HEK293 (cell line): ENCODE measurements at regions of chr16 and their contacts with region 1.

Region 1: GRCh38 chr16:2023098-2023925 is 3.4 kb upstream of the NHERF2 start:
- H3K4me3 ChIP-seq: peak overlapping the region; percentile 13
- H3K27ac ChIP-seq: no peak overlapping the region
- H3K4me1 ChIP-seq: peaks cover 3% of the 10 kb centered on the region; the same call in 1 of the 2 replicates
- CTCF ChIP-seq: peak; percentile 98

Region 2: DNA sequence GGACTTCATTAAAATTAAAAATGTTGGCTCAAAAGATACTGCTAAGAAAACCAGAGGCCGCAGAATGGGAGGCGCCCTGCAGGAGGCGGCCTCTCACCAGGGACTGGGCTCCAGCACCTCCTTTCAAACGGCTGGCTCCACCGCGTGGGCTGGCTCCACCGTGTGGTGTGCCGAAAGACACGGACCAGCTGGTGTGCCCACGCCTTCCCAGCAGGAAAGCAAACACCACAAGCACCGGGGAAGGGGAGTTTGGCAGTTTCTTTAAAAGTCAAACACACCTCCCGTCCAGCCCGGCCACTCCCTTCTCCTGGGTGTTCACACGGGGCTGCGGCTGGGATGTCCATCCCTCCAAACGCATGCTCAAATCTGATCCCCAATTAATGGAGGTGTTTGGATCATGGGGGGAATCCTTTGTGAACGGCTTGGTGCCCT is 210.6 kb before region 1 on chr16:
- CTCF ChIA-PET with region 1: no interaction called
- POLR2A ChIA-PET with region 1: no interaction called
- H3K4me3 ChIP-seq: no peak overlapping the region
- H3K27ac ChIP-seq: no peak overlapping the region
- H3K4me1 ChIP-seq: no peaks in the 10 kb centered on the region
- CTCF ChIP-seq: peak; percentile 85

Region 3: DNA sequence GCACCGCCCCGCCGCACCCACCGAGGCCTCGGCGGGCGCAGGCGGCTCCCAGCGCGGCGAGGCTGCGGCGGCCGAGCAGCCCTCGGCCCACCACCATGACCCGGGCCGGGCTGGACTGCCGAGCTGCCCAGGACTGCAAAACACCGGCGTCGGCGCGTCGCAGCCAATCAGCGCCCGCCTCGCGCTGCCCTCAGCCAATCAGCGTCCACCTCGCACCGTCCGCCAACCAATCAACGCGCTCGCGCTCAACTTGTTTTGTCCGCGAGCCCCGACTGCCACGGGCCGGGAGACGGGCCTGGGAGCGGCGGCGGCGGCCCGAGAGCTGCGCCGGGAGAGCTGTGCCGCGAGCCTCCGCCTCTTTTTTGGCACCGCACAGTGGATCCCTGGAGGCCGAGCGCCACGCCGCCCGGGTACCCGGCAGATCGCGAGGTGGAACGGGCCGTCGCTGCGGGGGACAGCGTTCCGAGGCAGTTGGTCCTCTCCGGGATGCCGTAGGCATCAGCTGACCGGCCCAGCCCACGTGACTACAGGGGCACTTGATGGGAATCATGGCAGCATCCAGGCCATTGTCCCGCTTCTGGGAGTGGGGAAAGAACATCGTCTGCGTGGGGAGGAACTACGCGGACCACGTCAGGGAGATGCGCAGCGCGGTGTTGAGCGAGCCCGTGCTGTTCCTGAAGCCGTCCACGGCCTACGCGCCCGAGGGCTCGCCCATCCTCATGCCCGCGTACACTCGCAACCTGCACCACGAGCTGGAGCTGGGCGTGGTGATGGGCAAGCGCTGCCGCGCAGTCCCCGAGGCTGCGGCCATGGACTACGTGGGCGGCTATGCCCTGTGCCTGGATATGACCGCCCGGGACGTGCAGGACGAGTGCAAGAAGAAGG is 196.4 kb before region 1 on chr16 and contains the starts of genes FAHD1 and HAGH:
- CTCF ChIA-PET with region 1: no interaction called
- POLR2A ChIA-PET with region 1: no interaction called
- H3K4me3 ChIP-seq: peak within 1 kb of the TSS; percentile 97
- H3K27ac ChIP-seq: peak within 1 kb of the TSS; percentile 78; the same call in 1 of the 2 replicates
- H3K4me1 ChIP-seq: no peaks in the 10 kb centered on the region
- CTCF ChIP-seq: no peak; the same call in 1 of the 2 replicates

Region 4: DNA sequence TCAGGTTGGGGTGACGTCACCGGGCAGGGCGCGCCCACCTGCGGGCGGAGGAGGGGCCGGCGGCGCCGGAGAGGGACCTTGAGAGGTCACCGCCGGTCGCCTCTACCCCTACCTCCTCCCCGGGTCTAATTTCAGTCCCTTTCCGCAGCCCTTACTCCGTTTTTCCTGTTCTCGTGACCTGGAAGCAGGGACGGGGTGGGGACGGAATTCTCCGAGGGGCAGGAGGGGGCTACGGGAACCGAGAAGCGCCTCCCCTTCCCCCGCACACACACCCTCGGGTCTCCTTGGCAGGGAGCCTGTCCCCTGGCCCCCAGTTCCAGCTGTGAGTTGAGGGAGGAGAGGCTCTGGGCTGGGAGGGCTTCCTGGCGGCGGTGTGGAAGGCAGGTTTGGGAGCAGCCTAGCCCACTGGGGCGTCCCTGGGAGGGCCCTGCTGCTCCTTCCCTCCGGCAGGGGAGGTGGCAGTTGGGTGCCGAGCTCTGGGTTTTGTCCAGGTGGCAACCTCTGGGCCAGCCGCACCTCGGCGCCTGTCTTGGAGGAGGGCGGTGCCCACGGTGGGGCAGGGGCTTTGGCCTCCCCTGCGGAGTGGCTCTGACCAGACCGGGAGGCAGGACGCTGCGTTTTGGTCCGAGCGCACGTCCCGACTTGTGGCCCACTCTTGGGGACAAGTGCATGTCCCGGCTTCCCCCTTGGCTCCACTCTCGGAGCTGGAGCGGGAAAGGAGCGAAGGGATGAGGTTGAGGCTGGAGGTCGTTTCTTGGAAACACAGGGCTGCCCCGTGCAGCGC is 32.8 kb before region 1 on chr16:
- CTCF ChIA-PET with region 1: no interaction called
- POLR2A ChIA-PET with region 1: no interaction called
- H3K4me3 ChIP-seq: peak overlapping the region; percentile 45
- H3K27ac ChIP-seq: no peak overlapping the region; the same call in 1 of the 2 replicates
- H3K4me1 ChIP-seq: peaks cover 3% of the 10 kb centered on the region
- CTCF ChIP-seq: no peak

Region 5: GRCh38 chr16:2047330-2048115 is 24.2 kb after region 1 on chr16 and contains the starts of genes NTHL1 and TSC2:
- CTCF ChIA-PET with region 1: interaction called, 3 read pairs
- POLR2A ChIA-PET with region 1: interaction called, 15 read pairs
- H3K4me3 ChIP-seq: peak within 1 kb of the TSS; percentile 82
- H3K27ac ChIP-seq: peak within 1 kb of the TSS; percentile 58; the same call in 1 of the 2 replicates
- H3K4me1 ChIP-seq: no peaks in the 10 kb centered on the region
- CTCF ChIP-seq: peak; percentile 90

Region 6: GRCh38 chr16:2056681-2057407 is 33.5 kb after region 1 on chr16:
- CTCF ChIA-PET with region 1: interaction called, 10 read pairs
- POLR2A ChIA-PET with region 1: no interaction called
- H3K4me3 ChIP-seq: no peak overlapping the region
- H3K27ac ChIP-seq: no peak overlapping the region
- H3K4me1 ChIP-seq: no peaks in the 10 kb centered on the region
- CTCF ChIP-seq: peak; percentile 56

Region 7: GRCh38 chr16:2121853-2122252 is 98.5 kb after region 1 on chr16:
- CTCF ChIA-PET with region 1: interaction called, 10 read pairs
- POLR2A ChIA-PET with region 1: no interaction called
- H3K4me3 ChIP-seq: no peak overlapping the region
- H3K27ac ChIP-seq: no peak overlapping the region
- H3K4me1 ChIP-seq: peaks cover 10% of the 10 kb centered on the region
- CTCF ChIP-seq: no peak

Region 8: GRCh38 chr16:2147981-2148671 is 124.8 kb after region 1 on chr16 and contains the start of gene RAB26:
- CTCF ChIA-PET with region 1: interaction called, 20 read pairs
- POLR2A ChIA-PET with region 1: interaction called, 12 read pairs
- H3K4me3 ChIP-seq: peak within 1 kb of the TSS; percentile 43
- H3K27ac ChIP-seq: peak within 1 kb of the TSS; percentile 44; the same call in 1 of the 2 replicates
- H3K4me1 ChIP-seq: peaks cover 4% of the 10 kb centered on the region
- CTCF ChIP-seq: peak; percentile 18; the same call in 1 of the 2 replicates